ENCODE measurements at regions of chr10 and their contacts with region 1.

Region 1: DNA sequence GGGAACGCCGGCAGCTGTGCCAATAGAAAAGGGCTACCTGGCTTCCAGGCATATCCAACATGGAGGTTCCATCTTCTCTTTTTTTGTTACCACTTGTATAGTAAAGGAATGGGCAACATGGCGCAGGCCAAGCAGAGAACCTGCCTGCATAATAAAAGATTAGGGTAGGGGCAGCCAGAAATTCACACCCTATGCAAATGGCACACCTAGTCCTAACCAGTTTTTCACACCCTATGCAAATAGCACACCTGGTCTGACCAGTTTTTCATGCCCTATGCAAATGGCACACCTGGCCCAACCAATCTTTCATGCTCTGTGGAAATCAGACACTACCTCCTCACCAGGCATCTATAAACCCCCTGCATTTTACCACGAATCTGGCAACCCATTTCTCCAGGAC is 369.5 kb downstream of the IPMK start:
- DNase-seq: peak; percentile 86
- H3K4me3 Mint-ChIP-seq: peak overlapping the region; percentile 56
- H3K27ac Mint-ChIP-seq: peak overlapping the region; percentile 59
- H3K4me1 Mint-ChIP-seq: peaks cover 41% of the 10 kb centered on the region
- H3K27me3 Mint-ChIP-seq: no peaks in the 10 kb centered on the region
- CTCF ChIP-seq: no peak

Region 2: GRCh38 chr10:57628592-57629284 is 269.5 kb before region 1 on chr10:
- CTCF ChIA-PET with region 1: no interaction called
- intact Hi-C with region 1: no loop called
- DNase-seq: peak; percentile 38
- H3K4me3 Mint-ChIP-seq: peak overlapping the region; percentile 21
- H3K27ac Mint-ChIP-seq: peak overlapping the region; percentile 52
- H3K4me1 Mint-ChIP-seq: peaks cover 27% of the 10 kb centered on the region
- H3K27me3 Mint-ChIP-seq: no peaks in the 10 kb centered on the region
- CTCF ChIP-seq: no peak

Region 3: GRCh38 chr10:57844387-57844998 is 53.7 kb before region 1 on chr10:
- CTCF ChIA-PET with region 1: no interaction called
- intact Hi-C with region 1: no loop called
- DNase-seq: peak; percentile 14
- H3K4me3 Mint-ChIP-seq: peak overlapping the region; percentile 4
- H3K27ac Mint-ChIP-seq: no peak overlapping the region
- H3K4me1 Mint-ChIP-seq: peaks cover 54% of the 10 kb centered on the region
- H3K27me3 Mint-ChIP-seq: no peaks in the 10 kb centered on the region
- CTCF ChIP-seq: no peak

Region 4: DNA sequence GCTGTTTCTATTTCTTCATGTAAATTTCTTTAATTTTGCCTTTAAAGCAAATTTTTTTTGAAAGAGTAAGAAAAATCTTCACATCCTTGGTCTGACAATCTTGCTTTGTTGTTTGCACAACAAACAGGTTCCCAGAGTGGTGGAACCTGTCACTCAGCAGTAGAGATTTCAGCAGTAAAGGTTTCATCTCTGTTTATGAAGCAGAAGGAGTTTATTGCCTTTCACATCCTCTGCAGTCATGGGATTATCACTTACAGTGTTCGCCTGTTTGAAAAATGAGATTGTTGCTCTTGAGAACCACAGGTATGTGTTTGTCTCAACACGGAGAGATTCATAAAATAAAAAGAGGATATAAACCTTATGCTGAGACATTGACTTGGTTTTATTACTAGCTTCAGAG is 26.8 kb after region 1 on chr10:
- CTCF ChIA-PET with region 1: no interaction called
- intact Hi-C with region 1: loop called (anchors 2 kb)
- DNase-seq: peak; percentile 55
- H3K4me3 Mint-ChIP-seq: peak overlapping the region; percentile 9
- H3K27ac Mint-ChIP-seq: peak overlapping the region; percentile 38
- H3K4me1 Mint-ChIP-seq: peaks cover 46% of the 10 kb centered on the region
- H3K27me3 Mint-ChIP-seq: no peaks in the 10 kb centered on the region
- CTCF ChIP-seq: no peak